ENCODE measurements at regions of chr9 and their contacts with region 1.

Region 1: GRCh38 chr9:114505187-114506081 is at the start of gene WHRN:
- DNase-seq: peak; percentile 89
- H3K4me3 Mint-ChIP-seq: peak within 1 kb of the TSS; percentile 85
- H3K27ac Mint-ChIP-seq: peak within 1 kb of the TSS; percentile 79
- H3K4me1 Mint-ChIP-seq: peaks cover 19% of the 10 kb centered on the region
- H3K27me3 Mint-ChIP-seq: peaks cover 62% of the 10 kb centered on the region
- total RNA-seq, gene WHRN: 2.2 and 2.4 TPM in 2 replicates

Region 2: GRCh38 chr9:114339130-114339908 is 166.1 kb before region 1 on chr9:
- intact Hi-C with region 1: loop called (anchors 1 kb)
- DNase-seq: no peak
- H3K4me3 Mint-ChIP-seq: no peak overlapping the region
- H3K27ac Mint-ChIP-seq: peak overlapping the region; percentile 48
- H3K4me1 Mint-ChIP-seq: peaks cover 5% of the 10 kb centered on the region
- H3K27me3 Mint-ChIP-seq: no peaks in the 10 kb centered on the region

Region 3: DNA sequence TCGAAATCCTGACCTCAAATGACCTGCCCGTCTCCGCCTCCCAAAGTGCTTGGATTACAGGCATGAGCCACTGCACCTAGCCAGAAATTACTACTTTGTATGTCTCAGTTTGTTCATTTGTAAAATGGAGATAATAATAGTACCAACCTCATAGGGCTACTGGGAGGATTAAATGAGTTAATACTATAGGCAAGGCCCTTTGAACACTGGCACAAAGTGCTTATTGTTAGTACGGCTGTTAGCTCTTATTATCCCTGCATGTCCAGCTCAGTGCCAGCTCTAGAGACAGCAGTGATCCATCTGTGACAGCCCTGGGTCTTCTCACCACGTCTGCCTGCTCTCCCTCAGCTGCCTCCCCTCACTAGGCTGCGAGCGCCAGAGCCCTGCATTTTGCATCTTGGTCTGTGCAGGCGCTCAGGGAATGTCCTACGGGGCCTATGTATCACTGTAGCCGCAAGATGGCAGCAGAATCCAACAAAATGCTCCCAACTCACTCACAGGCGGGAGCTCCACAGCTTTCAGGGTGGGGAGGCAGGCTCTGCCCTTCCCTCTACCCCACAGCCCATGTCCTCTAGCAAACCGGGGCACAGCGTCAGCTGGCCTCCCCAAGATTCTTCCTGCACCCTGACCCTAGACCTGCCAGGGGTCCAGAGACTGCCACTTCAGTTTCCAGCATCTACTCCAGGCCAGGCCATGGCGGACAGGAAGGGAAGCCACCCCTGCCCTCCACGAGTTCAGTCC is 100.0 kb before region 1 on chr9:
- intact Hi-C with region 1: loop called (anchors 1 kb)
- DNase-seq: peak; percentile 71
- H3K4me3 Mint-ChIP-seq: no peak overlapping the region
- H3K27ac Mint-ChIP-seq: no peak overlapping the region
- H3K4me1 Mint-ChIP-seq: peaks cover 6% of the 10 kb centered on the region
- H3K27me3 Mint-ChIP-seq: peaks cover 3% of the 10 kb centered on the region

Region 4: DNA sequence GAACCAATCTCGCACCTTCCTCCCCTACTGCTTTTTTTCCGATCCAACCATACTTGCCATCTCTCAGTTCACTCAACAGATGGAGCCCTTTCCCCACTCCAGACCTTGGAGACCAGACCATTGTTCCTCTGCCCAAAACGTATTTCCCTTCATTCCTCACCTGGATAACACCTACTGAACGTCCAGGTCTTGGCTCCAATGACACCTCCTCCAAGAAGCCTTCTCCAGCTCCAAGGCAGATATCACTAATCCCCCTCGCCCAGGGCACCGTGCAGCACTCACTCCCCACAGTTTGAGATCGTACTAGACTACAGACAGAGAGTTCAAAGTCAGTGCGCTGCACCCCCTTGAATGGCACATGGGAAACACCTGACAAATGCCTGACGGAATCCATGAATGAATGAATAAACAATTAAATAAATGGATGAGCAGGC is 70.5 kb before region 1 on chr9:
- intact Hi-C with region 1: loop called (anchors 1 kb)
- DNase-seq: no peak
- H3K4me3 Mint-ChIP-seq: no peak overlapping the region
- H3K27ac Mint-ChIP-seq: no peak overlapping the region
- H3K4me1 Mint-ChIP-seq: peaks cover 5% of the 10 kb centered on the region
- H3K27me3 Mint-ChIP-seq: peaks cover 5% of the 10 kb centered on the region

Region 5: DNA sequence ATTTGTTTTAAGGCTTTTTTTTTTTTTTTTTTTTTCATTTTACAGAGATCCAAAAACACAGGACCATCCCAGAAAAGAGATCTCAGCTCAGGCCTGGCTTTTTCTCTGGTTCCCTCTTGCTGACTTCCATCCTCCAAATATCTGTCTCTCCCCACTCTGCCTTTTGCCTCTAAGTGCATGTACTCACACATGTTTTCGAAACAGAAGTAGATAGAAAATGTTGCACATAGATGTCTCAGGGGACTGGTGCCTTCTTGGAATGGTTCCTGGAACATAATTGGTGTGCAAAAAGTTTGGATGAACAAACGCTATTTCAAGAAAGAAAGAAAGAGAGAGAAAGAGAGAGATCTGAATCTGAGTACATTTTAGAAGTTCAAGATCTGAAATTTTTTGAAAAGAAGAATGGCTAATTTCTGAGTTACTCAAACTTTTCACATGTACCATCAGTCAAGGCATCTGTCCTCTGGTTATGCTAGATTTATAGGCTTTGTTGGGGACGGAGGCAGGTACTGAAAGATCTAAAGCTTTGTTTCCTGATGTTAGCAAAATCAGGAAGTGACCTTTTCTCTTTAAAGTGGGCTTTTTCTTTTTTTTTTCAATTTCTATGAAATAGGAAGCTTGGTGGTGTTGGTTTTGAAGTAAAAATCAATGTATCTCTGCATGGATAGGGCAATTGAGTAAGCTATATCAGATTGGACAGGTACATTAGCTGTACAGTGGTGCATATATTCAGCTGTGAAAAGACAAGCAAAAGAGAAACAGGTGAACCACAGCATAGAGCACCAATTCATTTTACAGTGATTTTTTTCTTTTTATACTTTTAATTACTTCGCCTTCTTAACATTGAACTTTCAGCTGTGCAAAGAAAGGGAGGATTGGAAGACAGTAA is 433.5 kb after region 1 on chr9:
- intact Hi-C with region 1: no loop called
- DNase-seq: no peak
- H3K4me3 Mint-ChIP-seq: no peak overlapping the region
- H3K27ac Mint-ChIP-seq: peak overlapping the region; percentile 35
- H3K4me1 Mint-ChIP-seq: peaks cover 26% of the 10 kb centered on the region
- H3K27me3 Mint-ChIP-seq: no peaks in the 10 kb centered on the region